ENCODE measurements at regions of chr11 and their contacts with region 1.

Region 1: GRCh38 chr11:6362873-6363678 is 27.2 kb upstream of the SMPD1 start:
- DNase-seq: peak; percentile 68
- ATAC-seq: peak; percentile 100
- H3K4me3 ChIP-seq: no peak overlapping the region
- H3K27ac ChIP-seq: no peak overlapping the region
- H3K4me1 ChIP-seq: peaks cover 0 to 6% of the 10 kb centered on the region in 2 experiments; a peak in 1 of 4 replicates
- H3K27me3 ChIP-seq: no peaks in the 10 kb centered on the region
- CTCF ChIP-seq: peak; percentile 79 to 98 (median 90)
- POLR2A ChIP-seq: no peak
- RAD21 ChIP-seq: peak; percentile 93

Region 2: GRCh38 chr11:5992604-5993251 is 370.3 kb before region 1 on chr11:
- CTCF ChIA-PET with region 1: interaction called, 18 read pairs
- POLR2A ChIA-PET with region 1: no interaction called
- RAD21 ChIA-PET with region 1: no interaction called
- intact Hi-C with region 1: loop called (anchors 1 kb)
- DNase-seq: peak; percentile 13
- ATAC-seq: peak; percentile 82
- H3K4me3 ChIP-seq: no peak overlapping the region
- H3K27ac ChIP-seq: no peak overlapping the region
- H3K4me1 ChIP-seq: no peaks in the 10 kb centered on the region
- H3K27me3 ChIP-seq: peaks cover 42% of the 10 kb centered on the region
- CTCF ChIP-seq: peak; percentile 38 to 73 (median 66); a peak in 5 of 6 replicates
- POLR2A ChIP-seq: no peak
- RAD21 ChIP-seq: peak; percentile 30; the same call in 1 of the 2 replicates

Region 3: DNA sequence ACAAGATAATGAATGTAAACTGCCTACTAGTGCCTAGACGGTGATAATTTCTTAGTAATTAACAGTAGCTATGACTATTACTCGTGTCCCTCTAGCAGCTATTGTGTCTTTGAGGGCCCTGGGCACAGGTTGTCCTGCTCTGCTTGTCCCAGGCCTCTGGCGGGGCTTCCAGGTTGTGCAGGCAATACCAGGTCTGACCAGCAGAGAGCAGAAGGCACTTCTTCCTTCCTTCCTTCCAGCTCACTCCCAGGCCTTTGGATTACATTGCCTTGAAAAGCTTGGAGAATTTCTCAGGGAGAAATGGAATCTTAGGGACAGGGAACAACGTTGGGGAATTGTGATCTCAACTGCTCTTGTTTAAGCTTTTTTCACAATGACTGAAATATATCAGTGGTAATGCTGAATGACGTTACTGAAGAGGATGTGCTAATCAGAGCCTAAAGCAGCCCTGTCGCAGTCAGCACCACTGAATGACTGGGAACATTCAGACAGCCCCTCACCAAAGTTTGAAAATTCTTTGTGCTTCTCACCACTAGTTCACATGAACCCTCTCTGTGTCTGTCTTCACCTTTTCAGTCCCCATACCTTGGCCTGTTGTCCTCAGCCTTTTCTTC is 111.8 kb before region 1 on chr11:
- CTCF ChIA-PET with region 1: interaction called, 69 read pairs
- POLR2A ChIA-PET with region 1: no interaction called
- RAD21 ChIA-PET with region 1: interaction called, 9 read pairs
- intact Hi-C with region 1: no loop called
- DNase-seq: peak; percentile 64
- ATAC-seq: peak; percentile 99
- H3K4me3 ChIP-seq: no peak overlapping the region
- H3K27ac ChIP-seq: no peak overlapping the region
- H3K4me1 ChIP-seq: peaks cover 0 to 9% of the 10 kb centered on the region in 2 experiments; a peak in 2 of 4 replicates
- H3K27me3 ChIP-seq: peaks cover 13% of the 10 kb centered on the region; the same call in 1 of the 2 replicates
- CTCF ChIP-seq: peak; percentile 84 to 97 (median 92)
- POLR2A ChIP-seq: no peak
- RAD21 ChIP-seq: peak; percentile 68

Region 4: GRCh38 chr11:6298605-6299004 is 64.5 kb before region 1 on chr11:
- CTCF ChIA-PET with region 1: interaction called, 16 read pairs
- POLR2A ChIA-PET with region 1: no interaction called
- RAD21 ChIA-PET with region 1: interaction called, 3 read pairs
- intact Hi-C with region 1: no loop called
- DNase-seq: peak; percentile 51
- ATAC-seq: peak; percentile 100
- H3K4me3 ChIP-seq: no peak overlapping the region
- H3K27ac ChIP-seq: no peak overlapping the region
- H3K4me1 ChIP-seq: no peaks in the 10 kb centered on the region
- H3K27me3 ChIP-seq: no peaks in the 10 kb centered on the region
- CTCF ChIP-seq: peak; percentile 97 to 100 (median 99)
- POLR2A ChIP-seq: no peak
- RAD21 ChIP-seq: peak; percentile 70

Region 5: GRCh38 chr11:6926208-6927029 is 563.3 kb after region 1 on chr11 and contains the start of gene ZNF215:
- CTCF ChIA-PET with region 1: no interaction called
- POLR2A ChIA-PET with region 1: no interaction called
- RAD21 ChIA-PET with region 1: no interaction called
- intact Hi-C with region 1: no loop called
- DNase-seq: peak; percentile 93
- ATAC-seq: peak; percentile 92
- H3K4me3 ChIP-seq: peak within 1 kb of the TSS; percentile 78 to 93
- H3K27ac ChIP-seq: peak within 1 kb of the TSS; percentile 89
- H3K4me1 ChIP-seq: peaks cover 11 to 15% of the 10 kb centered on the region in 2 experiments
- H3K27me3 ChIP-seq: no peaks in the 10 kb centered on the region
- CTCF ChIP-seq: no peak
- POLR2A ChIP-seq: peak; percentile 73
- RAD21 ChIP-seq: no peak
- total RNA-seq, gene ZNF215: 9.9 TPM

Measured in HCT116 (cell line).